ENCODE measurements at regions of chr12 and their contacts with region 1.

Region 1: DNA sequence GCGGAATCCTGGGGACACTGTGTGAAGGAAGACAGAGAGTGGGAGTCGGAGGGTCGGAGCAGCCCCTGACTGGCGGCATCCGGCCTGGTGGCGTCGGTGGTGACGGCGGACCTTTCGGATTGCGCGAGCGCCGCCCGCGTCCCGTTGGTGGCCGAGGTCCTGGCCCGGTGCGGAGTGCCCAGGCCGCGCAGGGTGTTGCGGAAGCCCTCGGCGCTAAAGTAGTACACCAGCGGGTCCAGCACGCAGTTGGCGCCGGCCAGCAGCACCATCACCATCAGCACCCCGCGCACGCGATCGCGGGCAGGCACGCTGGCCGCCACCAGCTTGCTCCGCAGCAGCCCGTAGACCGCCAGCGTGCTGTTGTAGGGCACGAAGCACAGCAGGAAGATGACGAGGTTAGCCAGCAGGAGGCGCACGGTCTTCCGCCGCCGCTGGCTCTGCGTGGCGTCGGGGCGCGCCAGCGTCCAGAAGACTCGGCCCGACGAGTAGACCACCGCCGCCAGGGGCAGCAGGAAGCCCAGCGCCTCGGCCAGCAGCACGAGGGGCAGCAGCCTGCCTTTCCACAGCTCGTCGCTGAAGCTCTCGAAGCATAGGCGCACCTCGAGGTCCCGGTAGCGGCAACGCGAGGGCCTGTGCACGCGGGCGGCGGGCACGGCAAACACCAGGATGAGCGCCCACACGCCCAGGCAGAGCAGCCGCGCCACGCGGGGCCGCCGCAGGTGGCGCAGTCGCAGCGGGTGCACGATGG is 13.1 kb upstream of the CHD4 start:
- DNase-seq: peak; percentile 75 to 82 (median 80)
- H3K4me3 ChIP-seq: peak overlapping the region in 3 of 7 experiments; percentile 14 to 54 (median 48)
- H3K27ac ChIP-seq: no peak overlapping the region
- H3K4me1 ChIP-seq: peaks cover 4 to 34% (median 30%) of the 10 kb centered on the region in 4 experiments
- H3K27me3 ChIP-seq: no peaks in the 10 kb centered on the region

Region 2: GRCh38 chr12:6582959-6583358 is 37.4 kb before region 1 on chr12:
- CTCF ChIA-PET with region 1: no interaction called
- POLR2A ChIA-PET with region 1: no interaction called
- DNase-seq: no peak
- H3K4me3 ChIP-seq: no peak overlapping the region
- H3K27ac ChIP-seq: no peak overlapping the region
- H3K4me1 ChIP-seq: no peaks in the 10 kb centered on the region
- H3K27me3 ChIP-seq: no peaks in the 10 kb centered on the region

Region 3: DNA sequence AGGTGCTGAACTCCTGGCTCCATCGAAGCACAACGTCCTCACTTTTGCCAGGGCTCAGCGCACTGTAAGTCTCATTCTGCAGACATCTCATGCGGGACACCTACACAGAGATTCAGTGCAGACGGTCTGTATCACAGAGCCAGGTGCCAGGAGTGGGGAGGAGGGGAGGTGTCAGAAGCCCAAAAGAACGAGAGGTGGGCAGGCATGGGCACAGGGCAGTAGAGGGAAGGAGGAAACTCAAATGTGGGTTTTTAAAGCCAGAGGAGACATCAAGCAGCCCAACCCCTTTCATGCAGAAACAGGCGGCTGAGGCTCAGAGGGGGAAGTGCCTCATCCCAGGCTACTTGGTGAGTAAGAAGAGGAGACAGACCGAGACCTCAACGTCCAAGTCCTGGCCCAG is 18.0 kb after region 1 on chr12:
- CTCF ChIA-PET with region 1: interaction called, 69 read pairs
- POLR2A ChIA-PET with region 1: interaction called, 3 read pairs
- DNase-seq: peak in 2 of 3 donors; percentile 73 to 78
- H3K4me3 ChIP-seq: peak overlapping the region in 2 of 7 experiments; percentile 8 to 21
- H3K27ac ChIP-seq: peak overlapping the region in 1 of 2 experiments; percentile 81
- H3K4me1 ChIP-seq: peaks cover 6 to 52% (median 46%) of the 10 kb centered on the region in 4 experiments
- H3K27me3 ChIP-seq: no peaks in the 10 kb centered on the region

Region 4: DNA sequence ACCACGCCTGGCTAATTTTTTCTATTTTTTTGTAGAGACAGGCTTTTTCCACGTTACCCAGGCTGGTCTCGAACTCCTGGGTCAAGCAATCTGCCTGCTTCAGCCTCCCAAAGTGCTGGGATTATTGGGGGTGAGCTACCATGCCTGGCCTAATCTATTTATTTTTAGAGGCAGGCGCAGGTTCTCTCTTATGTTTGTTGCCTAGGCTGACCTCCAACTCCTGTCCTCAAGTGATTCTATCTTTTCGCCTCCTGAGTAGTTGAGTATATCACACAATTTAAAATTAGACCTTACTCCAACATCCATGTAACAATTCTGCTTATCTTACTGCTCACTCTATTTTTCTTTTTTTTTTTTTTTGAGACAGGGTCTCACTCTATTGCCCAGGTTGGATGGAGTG is 33.7 kb after region 1 on chr12:
- CTCF ChIA-PET with region 1: interaction called, 18 read pairs
- POLR2A ChIA-PET with region 1: no interaction called
- DNase-seq: no peak
- H3K4me3 ChIP-seq: no peak overlapping the region
- H3K27ac ChIP-seq: no peak overlapping the region
- H3K4me1 ChIP-seq: no peaks in the 10 kb centered on the region
- H3K27me3 ChIP-seq: no peaks in the 10 kb centered on the region

Region 5: DNA sequence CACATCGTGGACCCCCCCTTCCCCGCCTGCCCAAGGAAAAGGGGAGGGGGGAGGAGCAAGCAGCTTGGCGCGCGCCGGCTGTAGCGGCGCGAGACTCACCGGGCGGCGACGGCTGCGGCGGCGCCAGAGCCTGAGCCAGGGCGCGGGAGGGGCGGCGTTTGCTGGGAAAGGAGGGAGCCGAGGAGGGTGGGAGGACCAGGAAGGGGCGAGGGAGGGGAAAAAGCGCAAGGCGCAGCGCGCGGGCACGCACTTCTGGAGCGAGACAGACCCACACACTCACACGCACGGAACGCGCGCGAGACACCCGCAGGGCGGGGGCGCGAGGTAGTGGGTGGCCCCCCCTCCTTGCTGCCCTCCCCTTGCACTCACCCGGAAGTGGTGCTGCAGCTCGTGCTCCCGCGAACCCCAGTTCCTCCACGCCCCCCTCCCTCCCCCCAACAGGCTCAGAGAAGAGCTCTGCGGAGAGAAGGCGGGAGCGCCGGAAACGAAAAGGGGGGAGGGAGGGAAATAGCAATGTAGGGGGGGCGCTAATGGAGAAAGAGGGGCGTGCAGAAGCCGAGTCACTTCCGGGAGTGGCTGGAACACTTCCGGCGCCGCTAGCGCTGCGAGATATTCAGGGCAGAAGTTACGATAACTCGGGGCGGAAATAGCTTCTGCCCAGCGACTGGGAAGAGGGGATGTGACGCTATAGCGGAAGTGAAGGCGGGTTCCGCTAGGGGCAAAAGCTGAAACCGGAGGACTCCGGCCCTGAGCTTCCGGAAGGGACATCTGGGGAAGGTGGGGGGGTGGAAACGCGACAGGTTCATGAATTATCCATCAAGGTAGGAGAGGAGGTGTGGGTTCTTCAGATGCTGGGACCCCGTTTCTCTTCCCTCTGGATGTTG is 68.9 kb after region 1 on chr12 and contains the start of gene ZNF384:
- CTCF ChIA-PET with region 1: interaction called, 59 read pairs
- POLR2A ChIA-PET with region 1: interaction called, 14 read pairs
- DNase-seq: peak; percentile 98 to 99 (median 98)
- H3K4me3 ChIP-seq: peak within 1 kb of the TSS; percentile 58 to 96 (median 87)
- H3K27ac ChIP-seq: peak within 1 kb of the TSS; percentile 85 to 95
- H3K4me1 ChIP-seq: peaks cover 12 to 44% (median 38%) of the 10 kb centered on the region in 4 experiments
- H3K27me3 ChIP-seq: no peaks in the 10 kb centered on the region